IMR-90 (cell line): ENCODE measurements at regions of chr11 and their contacts with region 1.

Region 1: DNA sequence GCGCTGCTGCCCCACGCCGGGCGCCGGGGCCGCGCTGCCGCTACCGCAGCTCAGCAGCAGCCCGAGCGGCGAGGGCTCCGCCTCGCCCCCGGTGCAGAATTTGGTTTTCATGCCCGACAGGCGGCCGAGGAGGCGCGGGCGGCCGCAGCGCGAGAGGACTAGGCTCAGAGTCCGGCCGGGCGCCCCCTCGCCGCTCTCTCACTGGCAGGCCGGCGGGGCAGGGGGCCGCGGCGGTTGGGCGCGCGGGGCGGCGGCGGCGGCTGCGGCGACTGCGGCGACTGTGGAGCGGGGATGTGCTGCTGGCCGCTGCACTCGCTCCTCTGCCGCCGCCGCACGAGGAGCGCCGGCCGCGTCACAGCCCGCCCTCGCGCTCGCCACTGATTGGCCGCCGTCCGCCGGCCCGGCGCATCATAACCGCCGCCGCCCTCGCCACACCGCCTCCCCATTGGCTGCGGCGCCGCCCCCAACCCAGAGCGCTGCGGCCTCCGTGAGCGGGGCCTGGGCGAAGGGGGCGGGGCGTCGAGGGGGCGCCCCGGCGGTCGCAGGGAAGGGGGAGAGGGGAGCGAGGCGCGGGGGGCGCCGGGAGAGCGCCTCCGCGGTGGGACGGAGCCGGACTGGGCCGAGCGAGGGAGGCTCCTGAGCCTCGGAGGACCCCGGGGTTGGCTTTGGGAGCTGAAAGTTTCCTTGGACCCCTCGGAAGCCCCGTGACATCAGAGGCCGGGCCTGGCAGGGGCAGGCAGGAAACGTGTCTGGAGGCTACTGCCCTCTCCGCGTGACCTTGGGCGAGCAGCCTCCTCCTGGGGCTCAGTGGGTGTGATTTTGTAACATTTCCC is at the start of gene CHKA:
- DNase-seq: peak; percentile 82
- ATAC-seq: peak; percentile 97
- H3K4me3 ChIP-seq: peak within 1 kb of the TSS; percentile 93
- H3K27ac ChIP-seq: peak within 1 kb of the TSS; percentile 79
- H3K4me1 ChIP-seq: peaks cover 12% of the 10 kb centered on the region
- H3K27me3 ChIP-seq: no peaks in the 10 kb centered on the region
- CTCF ChIP-seq: no peak
- POLR2A ChIP-seq: peak; percentile 55; the same call in 1 of the 2 replicates
- RAD21 ChIP-seq: no peak
- total RNA-seq, gene CHKA: 4.5 and 6.7 TPM in 2 replicates

Region 2: GRCh38 chr11:68010090-68011041 is 110.9 kb before region 1 on chr11 and contains the start of gene ALDH3B1:
- CTCF ChIA-PET with region 1: no interaction called
- POLR2A ChIA-PET with region 1: no interaction called
- dilution Hi-C with region 1: no loop called
- in situ Hi-C with region 1: no loop called
- intact Hi-C with region 1: loop called (anchors 5 kb)
- DNase-seq: peak; percentile 70
- ATAC-seq: peak; percentile 59
- H3K4me3 ChIP-seq: peak within 1 kb of the TSS; percentile 42
- H3K27ac ChIP-seq: peak within 1 kb of the TSS; percentile 88
- H3K4me1 ChIP-seq: peaks cover 44% of the 10 kb centered on the region
- H3K27me3 ChIP-seq: no peaks in the 10 kb centered on the region
- CTCF ChIP-seq: 0 out of 2 replicates have a peak, but pooled peaks have one; percentile 9
- POLR2A ChIP-seq: peak; percentile 32
- RAD21 ChIP-seq: no peak
- total RNA-seq, gene ALDH3B1: 11.8 and 11.9 TPM in 2 replicates

Region 3: GRCh38 chr11:68206187-68206601 is 84.9 kb after region 1 on chr11:
- CTCF ChIA-PET with region 1: no interaction called
- POLR2A ChIA-PET with region 1: no interaction called
- dilution Hi-C with region 1: no loop called
- in situ Hi-C with region 1: no loop called
- intact Hi-C with region 1: loop called (anchors 5 kb)
- DNase-seq: peak; percentile 69
- ATAC-seq: peak; percentile 73
- H3K4me3 ChIP-seq: no peak overlapping the region
- H3K27ac ChIP-seq: no peak overlapping the region
- H3K4me1 ChIP-seq: peaks cover 8% of the 10 kb centered on the region
- H3K27me3 ChIP-seq: no peaks in the 10 kb centered on the region
- CTCF ChIP-seq: peak; percentile 79
- POLR2A ChIP-seq: no peak
- RAD21 ChIP-seq: peak; percentile 65